ENCODE measurements at regions of chr17 and their contacts with region 1.

Region 1: DNA sequence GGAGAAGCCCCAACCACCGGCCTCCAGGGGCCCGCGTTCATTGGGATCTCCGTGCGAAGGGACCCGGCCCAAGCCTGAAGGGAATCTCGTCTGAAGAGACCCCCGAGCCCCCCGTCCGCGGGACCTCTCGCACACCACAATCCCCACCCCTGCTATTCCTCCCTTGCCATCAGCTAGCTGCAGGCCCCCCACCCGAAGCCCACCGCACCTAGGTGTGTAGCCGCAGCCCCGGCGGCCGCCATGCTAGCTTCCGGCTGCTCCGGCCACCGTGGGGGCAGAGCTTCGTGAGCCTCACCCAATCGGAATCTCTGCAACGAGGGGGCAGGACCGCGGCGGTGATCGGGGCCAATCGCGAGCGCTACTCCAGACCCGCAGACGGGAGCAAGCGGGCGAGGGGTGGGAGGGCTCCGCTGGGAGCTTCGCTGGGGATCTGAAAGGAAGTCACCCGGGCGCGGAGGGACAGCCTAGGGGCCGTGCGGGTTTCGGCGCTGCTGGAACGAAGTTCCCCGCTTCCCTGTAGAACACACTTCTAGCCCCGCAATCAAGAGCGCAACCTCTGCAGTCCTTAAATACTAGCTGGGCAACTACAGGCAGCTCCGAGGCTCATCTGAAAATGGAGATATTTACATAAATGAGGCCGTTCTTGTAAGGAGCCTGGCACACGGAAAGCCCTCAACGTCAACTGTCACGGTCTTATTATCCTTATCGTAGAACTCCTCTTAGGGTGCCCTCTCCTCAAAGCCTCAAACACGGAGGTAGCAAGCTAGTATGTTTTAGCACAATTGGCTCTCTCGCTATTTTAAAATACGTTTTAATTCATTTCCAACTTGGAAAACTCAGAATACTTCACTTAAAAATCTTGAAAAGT is at the start of gene PIGS:
- DNase-seq: peak; percentile 92 to 100
- ATAC-seq: peak; percentile 93 to 99
- H3K4me3 ChIP-seq: peak within 1 kb of the TSS; percentile 92
- H3K27ac ChIP-seq: peak within 1 kb of the TSS; percentile 87 to 91
- H3K4me1 ChIP-seq: peaks cover 26% of the 10 kb centered on the region
- CTCF ChIP-seq: no peak
- EP300 ChIP-seq: no peak
- POLR2A ChIP-seq: peak; percentile 84
- RAD21 ChIP-seq: no peak
- polyA plus RNA-seq, gene PIGS: 50.0 and 53.2 TPM in 2 replicates

Region 2: GRCh38 chr17:28585851-28586250 is 14.4 kb after region 1 on chr17:
- CTCF ChIA-PET with region 1: interaction called, 10 read pairs
- POLR2A ChIA-PET with region 1: no interaction called
- DNase-seq: no peak
- ATAC-seq: no peak
- H3K4me3 ChIP-seq: no peak overlapping the region
- H3K27ac ChIP-seq: no peak overlapping the region
- H3K4me1 ChIP-seq: no peaks in the 10 kb centered on the region
- CTCF ChIP-seq: no peak
- EP300 ChIP-seq: no peak
- POLR2A ChIP-seq: no peak
- RAD21 ChIP-seq: no peak

Measured in A549 (cell line).